MCF 10A (cell line): ENCODE measurements at regions of chr18 and their contacts with region 1.

Region 1: DNA sequence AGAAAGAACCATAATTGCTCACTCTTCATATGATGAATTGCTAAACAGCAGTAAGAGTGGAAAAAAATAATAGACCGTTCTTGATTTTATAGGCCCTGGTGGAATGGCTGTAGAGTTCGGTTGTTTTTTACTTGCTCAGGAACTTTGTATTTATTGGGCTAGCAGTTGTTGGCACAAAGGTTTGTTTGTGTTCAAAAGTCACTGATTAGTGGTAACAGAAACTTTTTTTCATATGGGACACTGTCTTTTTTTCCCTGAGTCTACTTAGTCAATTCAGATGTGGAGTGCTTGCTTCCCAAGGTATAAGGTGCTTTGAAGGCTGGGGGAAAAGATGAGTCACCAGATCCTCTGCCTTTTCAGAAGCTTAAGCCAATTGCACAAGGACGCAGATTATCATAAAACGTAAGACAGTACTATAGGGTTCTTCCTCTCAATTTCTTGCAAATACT is 25.8 kb downstream of the PHLPP1 start:
- DNase-seq: peak; percentile 88
- H3K4me3 Mint-ChIP-seq: peak overlapping the region; percentile 38
- H3K27ac Mint-ChIP-seq: peak overlapping the region; percentile 72
- H3K4me1 Mint-ChIP-seq: peaks cover 37% of the 10 kb centered on the region
- H3K27me3 Mint-ChIP-seq: no peaks in the 10 kb centered on the region
- CTCF ChIP-seq: no peak

Region 2: DNA sequence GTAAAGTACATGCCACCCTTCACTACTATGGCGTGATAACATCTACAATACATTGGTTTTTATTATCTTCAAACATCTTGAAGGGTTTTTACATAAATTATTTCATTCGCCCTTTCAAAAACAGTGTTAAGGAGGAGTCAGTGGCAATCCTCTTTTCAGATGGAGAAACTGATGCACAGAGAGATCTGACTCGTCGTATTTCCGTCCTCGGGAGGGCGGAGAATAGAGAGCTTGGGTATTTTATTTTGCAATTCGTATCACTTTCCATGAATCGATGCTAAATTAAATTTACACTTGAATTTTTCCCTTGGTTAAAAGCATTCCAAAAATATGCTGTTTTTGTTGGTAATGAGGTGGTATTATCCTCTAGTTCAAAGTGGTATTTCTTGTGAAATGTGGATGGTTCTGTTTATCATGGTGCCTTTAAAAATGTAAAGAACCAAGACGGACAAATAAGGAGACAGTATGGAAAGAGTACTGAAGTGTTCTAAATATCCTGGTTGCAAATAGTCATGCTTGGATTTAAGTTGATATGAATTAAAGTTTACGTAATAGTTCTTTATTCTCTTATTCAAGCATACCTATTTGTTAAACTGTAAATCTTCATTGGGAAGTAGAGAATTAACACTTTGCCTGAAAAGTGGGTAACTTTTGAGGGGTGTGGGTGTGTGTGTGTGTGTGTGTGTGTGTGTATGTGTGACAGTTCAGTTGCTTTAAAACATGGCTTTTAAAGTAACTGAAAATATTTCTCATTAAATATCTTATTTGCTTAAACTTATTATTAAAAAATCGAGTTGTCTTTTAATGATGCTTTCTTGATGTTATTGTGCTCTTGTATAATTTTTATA is 20.2 kb before region 1 on chr18:
- CTCF ChIA-PET with region 1: interaction called, 3 read pairs
- POLR2A ChIA-PET with region 1: interaction called, 43 read pairs
- intact Hi-C with region 1: no loop called
- DNase-seq: no peak
- H3K4me3 Mint-ChIP-seq: no peak overlapping the region
- H3K27ac Mint-ChIP-seq: no peak overlapping the region
- H3K4me1 Mint-ChIP-seq: peaks cover 35% of the 10 kb centered on the region
- H3K27me3 Mint-ChIP-seq: no peaks in the 10 kb centered on the region
- CTCF ChIP-seq: no peak

Region 3: GRCh38 chr18:62759704-62760402 is 18.7 kb after region 1 on chr18:
- CTCF ChIA-PET with region 1: interaction called, 5 read pairs
- POLR2A ChIA-PET with region 1: interaction called, 39 read pairs
- intact Hi-C with region 1: no loop called
- DNase-seq: peak; percentile 80
- H3K4me3 Mint-ChIP-seq: peak overlapping the region; percentile 63
- H3K27ac Mint-ChIP-seq: peak overlapping the region; percentile 92
- H3K4me1 Mint-ChIP-seq: peaks cover 58% of the 10 kb centered on the region
- H3K27me3 Mint-ChIP-seq: no peaks in the 10 kb centered on the region
- CTCF ChIP-seq: no peak

Region 4: GRCh38 chr18:62784966-62785413 is 43.8 kb after region 1 on chr18:
- CTCF ChIA-PET with region 1: interaction called, 6 read pairs
- POLR2A ChIA-PET with region 1: interaction called, 11 read pairs
- intact Hi-C with region 1: no loop called
- DNase-seq: no peak
- H3K4me3 Mint-ChIP-seq: no peak overlapping the region
- H3K27ac Mint-ChIP-seq: peak overlapping the region; percentile 95
- H3K4me1 Mint-ChIP-seq: peaks cover 37% of the 10 kb centered on the region
- H3K27me3 Mint-ChIP-seq: no peaks in the 10 kb centered on the region
- CTCF ChIP-seq: no peak